Heart right ventricle (tissue), 16 donors: ENCODE measurements at regions of chr11 and their contacts with region 1.

Region 1: GRCh38 chr11:115446214-115446613 is 58.0 kb downstream of the CADM1 start:
- DNase-seq: peak in 1 of 2 donors; percentile 10
- ATAC-seq: peak in 4 of 8 donors; percentile 23 to 65 (median 52)
- H3K4me3 ChIP-seq: no peak overlapping the region
- H3K27ac ChIP-seq: no peak overlapping the region
- H3K4me1 ChIP-seq: peaks cover 0 to 8% (median 0%) of the 10 kb centered on the region in 9 donors
- H3K27me3 ChIP-seq: no peaks in the 10 kb centered on the region
- CTCF ChIP-seq: no peak

Region 2: GRCh38 chr11:115590254-115590653 is 144.0 kb after region 1 on chr11:
- intact Hi-C with region 1: no loop called
- DNase-seq: no peak
- ATAC-seq: peak in 6 of 8 donors; percentile 42 to 85 (median 76)
- H3K4me3 ChIP-seq: no peak overlapping the region
- H3K27ac ChIP-seq: no peak overlapping the region
- H3K4me1 ChIP-seq: peaks cover 0 to 6% (median 0%) of the 10 kb centered on the region in 9 donors
- H3K27me3 ChIP-seq: no peaks in the 10 kb centered on the region
- CTCF ChIP-seq: no peak

Region 3: GRCh38 chr11:116065986-116066385 is 619.8 kb after region 1 on chr11:
- intact Hi-C with region 1: loop called in 1 of 10 experiments (anchors 5 kb)
- DNase-seq: no peak
- ATAC-seq: no peak
- H3K4me3 ChIP-seq: no peak overlapping the region
- H3K27ac ChIP-seq: no peak overlapping the region
- H3K4me1 ChIP-seq: peaks cover 0 to 13% (median 4%) of the 10 kb centered on the region in 9 donors
- H3K27me3 ChIP-seq: peaks cover 0 to 24% (median 0%) of the 10 kb centered on the region in 7 donors
- CTCF ChIP-seq: no peak